A549 (cell line): ENCODE measurements at regions of chr20 and their contacts with region 1.

Region 1: DNA sequence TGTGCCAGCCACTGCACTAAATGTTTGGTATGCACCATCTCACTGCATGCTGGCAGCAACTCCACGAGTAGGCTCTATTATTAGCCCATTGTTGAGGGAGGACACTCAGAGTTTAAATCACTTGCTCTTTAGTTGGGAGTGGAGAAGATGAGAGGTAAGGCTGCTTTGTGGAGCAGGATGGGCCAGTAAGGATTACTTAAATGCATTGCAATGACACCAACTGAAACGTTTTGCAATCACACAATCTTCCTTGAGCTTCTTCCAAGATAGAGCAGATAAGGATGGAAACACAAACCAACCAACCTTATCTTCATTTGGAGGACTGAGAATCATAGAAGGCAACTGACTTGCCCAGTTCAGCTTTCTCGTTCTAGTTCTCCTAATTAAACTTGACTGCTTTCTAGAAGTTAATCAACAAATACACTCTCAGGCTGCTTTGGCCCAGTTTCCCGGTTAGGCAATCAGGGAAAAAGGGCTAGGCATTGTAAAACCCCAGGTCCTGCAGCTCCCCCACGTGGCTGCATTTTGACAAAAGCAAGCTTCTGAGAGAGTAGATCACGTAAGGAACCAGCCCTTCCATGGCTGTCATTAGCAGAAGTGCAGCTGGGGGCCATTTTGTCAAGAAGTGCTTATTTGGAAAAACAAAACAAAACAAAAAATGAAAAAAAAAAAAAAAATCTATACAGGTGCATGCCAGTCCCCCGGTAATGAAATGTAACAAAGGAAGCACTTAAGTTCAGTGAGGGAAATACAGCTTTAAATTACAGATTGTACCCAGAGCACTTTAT is 130.6 kb downstream of the BCAS1 start:
- DNase-seq: peak; percentile 79 to 94
- ATAC-seq: peak; percentile 91 to 94
- H3K4me3 ChIP-seq: no peak overlapping the region
- H3K27ac ChIP-seq: peak overlapping the region; percentile 62 to 78
- H3K4me1 ChIP-seq: peaks cover 60% of the 10 kb centered on the region
- CTCF ChIP-seq: peak; percentile 92
- EP300 ChIP-seq: no peak; a peak in 1 of 5 replicates
- POLR2A ChIP-seq: no peak
- RAD21 ChIP-seq: peak; percentile 98 to 99

Region 2: DNA sequence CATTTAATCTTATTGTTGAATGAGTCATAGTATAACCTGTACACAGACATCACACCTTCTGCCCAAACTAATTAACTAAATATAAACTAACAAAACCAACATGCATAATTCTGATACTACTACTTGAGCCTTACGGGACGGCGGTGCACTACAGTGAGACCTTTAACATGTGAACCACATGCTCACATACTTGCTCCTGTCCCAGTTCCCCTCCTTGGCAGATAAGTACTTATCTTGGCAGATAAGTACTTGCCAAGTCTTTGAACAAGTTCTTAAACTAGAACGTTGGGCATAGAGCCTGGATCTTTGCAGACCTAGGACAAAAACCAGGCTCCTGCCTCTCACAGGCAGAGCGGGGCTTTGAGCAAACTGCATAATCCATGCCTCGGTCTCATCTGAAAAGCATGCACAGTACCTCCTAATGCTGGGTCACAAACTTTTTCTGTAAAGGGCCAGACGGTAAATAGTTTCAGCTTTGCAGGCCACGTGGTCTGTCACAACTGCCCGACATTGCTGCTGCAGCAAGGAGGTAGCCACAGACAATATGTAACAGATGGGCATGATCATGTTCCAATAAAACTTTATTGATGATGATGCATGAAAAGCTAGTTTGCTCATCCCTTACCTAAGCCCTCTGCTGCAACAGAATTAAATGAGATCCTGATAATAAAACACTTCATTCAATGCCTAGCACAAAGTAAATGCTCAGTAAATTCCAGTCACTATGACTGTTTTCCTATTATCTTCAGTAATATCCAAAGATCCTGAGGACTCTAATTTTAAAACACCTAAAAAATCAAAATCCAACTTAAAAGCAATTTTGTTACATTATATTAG is 369.0 kb before region 1 on chr20:
- CTCF ChIA-PET with region 1: interaction called, 120 read pairs
- POLR2A ChIA-PET with region 1: no interaction called
- DNase-seq: no peak
- ATAC-seq: peak in 1 of 2 experiments; percentile 12; a peak in 1 of 6 replicates
- H3K4me3 ChIP-seq: no peak overlapping the region
- H3K27ac ChIP-seq: no peak overlapping the region
- H3K4me1 ChIP-seq: no peaks in the 10 kb centered on the region
- CTCF ChIP-seq: no peak
- EP300 ChIP-seq: no peak
- POLR2A ChIP-seq: no peak
- RAD21 ChIP-seq: no peak

Region 3: GRCh38 chr20:53699958-53700305 is 239.8 kb before region 1 on chr20:
- CTCF ChIA-PET with region 1: no interaction called
- POLR2A ChIA-PET with region 1: no interaction called
- DNase-seq: no peak
- ATAC-seq: no peak
- H3K4me3 ChIP-seq: no peak overlapping the region
- H3K27ac ChIP-seq: no peak overlapping the region
- H3K4me1 ChIP-seq: no peaks in the 10 kb centered on the region; the same call in 2 of the 3 replicates
- CTCF ChIP-seq: no peak
- EP300 ChIP-seq: no peak
- POLR2A ChIP-seq: no peak
- RAD21 ChIP-seq: no peak

Region 4: GRCh38 chr20:53750827-53751619 is 188.7 kb before region 1 on chr20:
- CTCF ChIA-PET with region 1: interaction called, 12 read pairs
- POLR2A ChIA-PET with region 1: interaction called, 10 read pairs
- DNase-seq: no peak
- ATAC-seq: peak in 1 of 2 experiments; percentile 12; a peak in 1 of 6 replicates
- H3K4me3 ChIP-seq: no peak overlapping the region
- H3K27ac ChIP-seq: peak overlapping the region; percentile 86
- H3K4me1 ChIP-seq: peaks cover 53% of the 10 kb centered on the region
- CTCF ChIP-seq: no peak
- EP300 ChIP-seq: no peak
- POLR2A ChIP-seq: no peak
- RAD21 ChIP-seq: no peak

Region 5: DNA sequence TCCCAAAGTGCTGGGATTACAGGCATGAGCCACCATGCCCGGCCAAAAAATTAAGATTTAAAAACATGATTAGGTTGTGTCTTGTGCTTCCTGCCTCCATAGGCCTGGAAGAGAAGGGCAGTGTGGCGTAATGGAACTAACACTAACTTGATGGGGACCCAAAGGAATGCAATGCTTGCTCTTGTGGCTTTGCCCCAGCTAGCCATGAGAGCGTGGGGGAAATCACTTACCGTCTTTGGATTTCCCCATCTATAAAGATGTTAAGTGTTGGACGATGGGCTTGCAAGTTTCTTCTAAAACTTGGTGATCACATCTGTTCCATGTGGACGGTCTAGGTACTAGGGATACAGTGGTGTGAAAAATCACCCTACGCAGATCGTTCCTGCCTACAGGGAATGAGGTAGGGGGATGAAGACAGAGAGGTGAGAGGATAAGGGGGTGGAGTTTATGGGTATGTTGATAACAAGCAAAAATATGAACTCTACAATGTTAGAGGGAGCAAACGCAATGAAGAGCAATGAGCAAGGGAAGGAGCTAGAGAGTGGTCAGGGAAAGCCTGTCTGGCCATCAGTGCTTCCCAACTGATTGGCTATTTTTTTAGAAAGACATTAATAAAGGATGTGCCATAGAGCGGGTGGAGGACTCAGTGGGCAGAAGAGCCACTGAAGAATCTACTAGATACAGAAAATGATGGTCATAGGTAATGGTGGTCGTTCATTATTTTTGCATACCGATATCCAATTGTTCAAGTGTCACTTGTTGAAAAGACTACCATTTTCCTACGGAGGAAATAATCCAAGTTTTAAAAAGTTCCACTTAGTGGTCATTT is 34.5 kb before region 1 on chr20:
- CTCF ChIA-PET with region 1: interaction called, 17 read pairs
- POLR2A ChIA-PET with region 1: no interaction called
- DNase-seq: no peak
- ATAC-seq: no peak
- H3K4me3 ChIP-seq: no peak overlapping the region
- H3K27ac ChIP-seq: peak overlapping the region; percentile 77 to 80
- H3K4me1 ChIP-seq: peaks cover 49% of the 10 kb centered on the region
- CTCF ChIP-seq: no peak
- EP300 ChIP-seq: no peak
- POLR2A ChIP-seq: no peak
- RAD21 ChIP-seq: no peak

Region 6: DNA sequence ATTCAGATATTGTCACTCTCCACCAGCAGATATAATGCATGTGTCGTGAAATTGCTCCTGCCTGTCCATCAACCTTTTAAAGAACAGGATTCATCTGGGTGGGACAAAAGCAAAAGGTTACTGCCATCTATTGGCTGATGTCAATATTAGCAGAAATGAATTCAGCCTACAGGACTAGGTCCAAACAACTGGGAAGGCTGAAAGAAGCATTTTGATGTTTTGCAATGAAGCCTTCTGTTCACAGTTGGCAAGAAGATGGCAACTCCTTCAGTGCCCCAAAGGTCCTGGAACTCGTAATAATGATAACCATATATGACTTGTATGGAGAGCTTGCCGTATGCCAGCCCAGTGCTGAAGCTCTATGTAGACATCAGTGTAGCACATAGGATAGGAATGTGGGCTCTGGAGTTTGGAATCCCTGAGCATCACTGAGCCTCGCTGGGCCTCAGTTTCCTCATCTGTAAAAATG is 123.1 kb after region 1 on chr20:
- CTCF ChIA-PET with region 1: interaction called, 23 read pairs
- POLR2A ChIA-PET with region 1: interaction called, 5 read pairs
- DNase-seq: peak; percentile 62 to 76
- ATAC-seq: peak; percentile 77 to 82
- H3K4me3 ChIP-seq: no peak overlapping the region
- H3K27ac ChIP-seq: peak overlapping the region in 1 of 2 experiments; percentile 27; a peak in 3 of 6 replicates
- H3K4me1 ChIP-seq: peaks cover 47% of the 10 kb centered on the region
- CTCF ChIP-seq: peak; percentile 88
- EP300 ChIP-seq: no peak
- POLR2A ChIP-seq: no peak
- RAD21 ChIP-seq: peak; percentile 85 to 90

Region 7: DNA sequence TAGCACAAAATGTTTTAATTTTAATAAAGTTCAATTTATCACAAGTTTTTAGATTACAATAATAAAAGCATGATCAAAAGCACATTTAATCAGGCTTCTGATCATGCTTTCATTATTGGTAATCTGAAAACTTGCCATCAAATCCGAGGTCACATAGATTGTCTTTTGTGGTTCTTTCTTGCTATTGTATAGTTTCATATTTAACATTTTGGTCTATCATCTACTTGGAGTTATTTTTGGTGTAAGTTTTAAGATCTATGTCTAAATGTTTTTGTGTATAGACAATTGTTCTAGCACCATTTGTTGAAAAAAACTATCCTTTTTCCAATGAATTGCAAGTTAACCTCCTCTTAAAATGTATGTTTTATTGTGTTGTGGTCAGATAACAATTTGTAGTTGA is 932.0 kb after region 1 on chr20:
- CTCF ChIA-PET with region 1: no interaction called
- POLR2A ChIA-PET with region 1: no interaction called
- DNase-seq: no peak
- ATAC-seq: no peak
- H3K4me3 ChIP-seq: no peak overlapping the region
- H3K27ac ChIP-seq: no peak overlapping the region
- H3K4me1 ChIP-seq: no peaks in the 10 kb centered on the region
- CTCF ChIP-seq: no peak
- EP300 ChIP-seq: no peak
- POLR2A ChIP-seq: no peak
- RAD21 ChIP-seq: no peak